Activated CD4-positive, alpha-beta memory T cell treated with anti-CD3 and anti-CD28 coated beads for 36 hours (primary cell): ENCODE measurements at regions of chr9 and their contacts with region 1.

Region 1: DNA sequence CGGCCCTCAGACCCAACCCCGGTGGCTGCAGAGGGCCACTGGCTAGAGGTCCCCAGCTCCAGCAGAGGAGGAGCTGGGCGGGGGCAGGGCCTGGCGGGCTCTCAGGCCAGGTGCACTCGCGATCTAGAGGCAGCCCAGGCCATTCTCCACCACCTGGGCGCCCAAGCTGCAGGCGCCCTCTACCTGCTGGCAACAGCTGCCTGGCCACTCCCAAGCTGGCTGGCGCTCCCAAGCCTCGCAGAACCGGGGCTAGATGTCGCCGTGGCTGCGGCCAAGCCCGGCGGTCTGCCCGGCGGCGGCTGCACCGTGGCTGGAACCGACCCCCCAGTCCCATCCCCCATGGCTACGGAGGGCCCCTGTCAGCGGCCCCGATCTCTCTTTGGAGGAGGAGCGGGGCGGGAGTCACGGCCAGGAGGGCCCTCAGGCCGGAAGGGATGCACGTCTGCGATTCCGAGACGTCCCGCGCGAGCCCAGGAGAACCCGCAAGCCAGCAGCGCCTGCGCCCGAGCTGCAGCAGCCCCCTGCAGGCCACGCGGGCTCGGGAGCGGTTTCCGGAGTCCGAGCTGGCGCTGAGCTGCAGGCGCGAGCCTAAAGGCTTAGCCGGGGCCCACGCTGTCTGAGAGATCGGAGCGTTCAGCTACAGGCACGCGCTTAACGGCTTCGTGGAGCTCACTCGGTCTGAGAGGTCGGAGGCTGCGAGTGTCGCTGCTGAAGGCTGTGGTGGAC is 44.3 kb upstream of the BICD2 start:
- DNase-seq: peak; percentile 76
- H3K4me3 Mint-ChIP-seq: peak overlapping the region; percentile 77
- H3K27ac Mint-ChIP-seq: no peak overlapping the region
- H3K4me1 Mint-ChIP-seq: peaks cover 15% of the 10 kb centered on the region
- H3K27me3 Mint-ChIP-seq: peaks cover 53% of the 10 kb centered on the region

Region 2: DNA sequence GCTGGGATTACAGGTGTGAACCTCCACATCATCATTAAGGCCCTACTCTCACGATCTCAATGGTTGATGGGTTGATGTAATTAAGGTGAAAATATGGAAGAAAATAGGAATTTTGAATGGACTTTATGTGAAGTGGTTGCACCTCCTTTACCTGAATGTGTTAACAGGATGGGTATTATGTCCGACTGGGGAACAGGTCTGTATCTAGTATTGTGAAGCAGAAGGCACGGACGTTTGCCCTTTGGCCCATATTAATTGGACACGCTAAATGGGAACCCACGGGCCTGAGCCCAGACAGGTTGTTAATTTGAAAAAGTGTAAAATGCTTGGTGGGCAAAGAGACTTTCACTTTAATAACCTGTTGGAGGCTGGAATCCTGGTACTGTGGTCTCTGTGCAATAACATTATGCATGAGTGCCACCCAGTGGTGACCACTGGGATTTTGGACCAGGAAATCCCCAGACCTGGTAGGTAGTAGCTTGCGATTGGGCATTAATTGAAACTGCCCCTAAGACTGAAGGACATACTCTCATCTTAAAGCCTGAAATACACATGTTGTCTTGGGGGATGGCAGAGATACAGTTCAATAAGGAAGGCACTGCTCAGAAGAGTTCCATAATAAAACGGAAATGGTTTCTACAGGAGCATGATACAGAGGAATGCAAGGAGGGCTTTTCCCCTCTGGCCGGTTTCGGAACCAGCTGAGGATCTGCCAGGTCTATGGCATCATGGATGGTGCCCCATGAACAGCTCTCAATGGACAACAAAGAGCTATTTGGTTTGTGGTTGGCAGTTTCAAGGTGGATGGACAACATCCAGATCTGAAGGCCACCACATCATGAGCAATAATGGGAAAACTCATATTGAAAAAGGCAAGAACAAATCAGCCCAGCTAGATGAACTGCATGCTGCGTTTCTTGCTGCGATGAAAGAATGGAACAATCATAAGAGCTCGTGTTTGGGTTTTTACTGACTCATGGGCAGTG is 18.1 kb before region 1 on chr9:
- CTCF ChIA-PET with region 1: interaction called, 24 read pairs
- POLR2A ChIA-PET with region 1: no interaction called
- intact Hi-C with region 1: no loop called
- DNase-seq: peak; percentile 78
- H3K4me3 Mint-ChIP-seq: peak overlapping the region; percentile 6
- H3K27ac Mint-ChIP-seq: peak overlapping the region; percentile 39
- H3K4me1 Mint-ChIP-seq: peaks cover 12% of the 10 kb centered on the region
- H3K27me3 Mint-ChIP-seq: no peaks in the 10 kb centered on the region